ENCODE measurements at regions of chr17 and their contacts with region 1.

Region 1: GRCh38 chr17:27236717-27237315 is 57.1 kb upstream of the WSB1 start:
- DNase-seq: peak; percentile 76 to 80
- H3K4me3 ChIP-seq: no peak overlapping the region
- H3K27ac ChIP-seq: no peak overlapping the region
- H3K4me1 ChIP-seq: peaks cover 0 to 14% of the 10 kb centered on the region in 2 donors
- H3K27me3 ChIP-seq: no peaks in the 10 kb centered on the region
- CTCF ChIP-seq: peak; percentile 84 to 92 (median 92)
- POLR2A ChIP-seq: no peak

Region 2: GRCh38 chr17:27247071-27247957 is 10.5 kb after region 1 on chr17:
- intact Hi-C with region 1: no loop called
- DNase-seq: peak; percentile 85 to 91
- H3K4me3 ChIP-seq: peak overlapping the region in 1 of 3 donors; percentile 13
- H3K27ac ChIP-seq: peak overlapping the region; percentile 86 to 92
- H3K4me1 ChIP-seq: peaks cover 3 to 28% of the 10 kb centered on the region in 2 donors
- H3K27me3 ChIP-seq: no peaks in the 10 kb centered on the region
- CTCF ChIP-seq: no peak
- POLR2A ChIP-seq: no peak

Region 3: GRCh38 chr17:27339836-27340550 is 103.2 kb after region 1 on chr17:
- intact Hi-C with region 1: loop called (anchors 5 kb)
- DNase-seq: no peak
- H3K4me3 ChIP-seq: no peak overlapping the region
- H3K27ac ChIP-seq: no peak overlapping the region
- H3K4me1 ChIP-seq: no peaks in the 10 kb centered on the region
- H3K27me3 ChIP-seq: no peaks in the 10 kb centered on the region
- CTCF ChIP-seq: no peak
- POLR2A ChIP-seq: no peak

Measured in breast epithelium (tissue), 4 donors.